MCF 10A (cell line): ENCODE measurements at regions of chr1 and their contacts with region 1.

Region 1: DNA sequence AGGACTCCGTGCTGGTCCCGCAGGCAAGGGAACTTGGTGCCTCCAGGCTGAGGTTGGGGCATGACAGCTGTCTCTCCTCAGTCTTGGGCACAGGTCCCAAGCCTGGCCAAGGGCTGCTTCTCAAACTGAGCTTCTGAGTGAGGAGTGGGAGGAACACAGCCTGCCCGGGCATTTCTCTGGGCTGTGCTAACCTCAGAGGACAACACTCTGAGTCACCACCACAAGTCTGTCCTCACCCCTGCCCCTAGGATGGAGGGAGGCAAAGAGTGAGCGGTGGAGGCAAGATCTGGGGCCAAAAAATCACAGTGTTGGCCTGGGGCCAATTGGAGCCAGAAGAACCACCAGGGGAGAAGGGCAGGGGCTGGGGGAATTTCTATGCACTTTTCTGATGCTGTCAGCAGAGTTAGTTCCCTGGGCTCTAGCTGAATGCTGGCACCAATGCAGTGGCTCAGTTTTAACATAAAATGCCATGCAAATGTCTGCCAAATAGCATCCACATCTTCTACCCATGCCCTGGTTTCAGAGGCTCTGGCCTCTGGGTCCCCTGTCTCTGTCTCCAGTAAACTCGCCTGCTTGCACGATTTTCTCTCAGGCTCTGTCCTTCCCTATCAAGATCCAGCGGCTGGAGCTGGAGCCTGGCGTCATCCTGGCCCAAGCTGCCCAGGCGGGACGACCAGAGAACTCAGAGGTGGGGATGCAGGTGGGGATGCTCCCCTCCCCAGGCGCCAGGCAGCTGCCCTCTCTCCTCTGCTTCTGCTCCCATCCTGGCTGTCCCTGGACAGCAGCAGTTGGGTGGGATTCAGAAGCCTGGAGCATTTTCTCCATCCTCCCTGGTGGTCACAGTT is 11.0 kb upstream of the CDK18 start:
- DNase-seq: peak; percentile 99
- H3K4me3 Mint-ChIP-seq: peak overlapping the region; percentile 53
- H3K27ac Mint-ChIP-seq: peak overlapping the region; percentile 86
- H3K4me1 Mint-ChIP-seq: peaks cover 38% of the 10 kb centered on the region
- H3K27me3 Mint-ChIP-seq: no peaks in the 10 kb centered on the region
- CTCF ChIP-seq: no peak

Region 2: GRCh38 chr1:205247130-205247921 is 246.1 kb before region 1 on chr1:
- CTCF ChIA-PET with region 1: no interaction called
- POLR2A ChIA-PET with region 1: no interaction called
- intact Hi-C with region 1: no loop called
- DNase-seq: no peak
- H3K4me3 Mint-ChIP-seq: no peak overlapping the region
- H3K27ac Mint-ChIP-seq: no peak overlapping the region
- H3K4me1 Mint-ChIP-seq: peaks cover 11% of the 10 kb centered on the region
- H3K27me3 Mint-ChIP-seq: no peaks in the 10 kb centered on the region
- CTCF ChIP-seq: no peak

Region 3: GRCh38 chr1:205284343-205285144 is 208.9 kb before region 1 on chr1:
- CTCF ChIA-PET with region 1: interaction called, 8 read pairs
- POLR2A ChIA-PET with region 1: interaction called, 13 read pairs
- intact Hi-C with region 1: no loop called
- DNase-seq: peak; percentile 100
- H3K4me3 Mint-ChIP-seq: peak overlapping the region; percentile 24
- H3K27ac Mint-ChIP-seq: peak overlapping the region; percentile 96
- H3K4me1 Mint-ChIP-seq: peaks cover 75% of the 10 kb centered on the region
- H3K27me3 Mint-ChIP-seq: no peaks in the 10 kb centered on the region
- CTCF ChIP-seq: no peak

Region 4: GRCh38 chr1:205422993-205423625 is 70.4 kb before region 1 on chr1:
- CTCF ChIA-PET with region 1: interaction called, 296 read pairs
- POLR2A ChIA-PET with region 1: no interaction called
- intact Hi-C with region 1: no loop called
- DNase-seq: no peak
- H3K4me3 Mint-ChIP-seq: no peak overlapping the region
- H3K27ac Mint-ChIP-seq: no peak overlapping the region
- H3K4me1 Mint-ChIP-seq: no peaks in the 10 kb centered on the region
- H3K27me3 Mint-ChIP-seq: peaks cover 67% of the 10 kb centered on the region
- CTCF ChIP-seq: peak; percentile 49

Region 5: GRCh38 chr1:205440476-205441317 is 52.8 kb before region 1 on chr1:
- CTCF ChIA-PET with region 1: interaction called, 110 read pairs
- POLR2A ChIA-PET with region 1: interaction called, 11 read pairs
- intact Hi-C with region 1: no loop called
- DNase-seq: peak; percentile 93
- H3K4me3 Mint-ChIP-seq: peak overlapping the region; percentile 1
- H3K27ac Mint-ChIP-seq: peak overlapping the region; percentile 77
- H3K4me1 Mint-ChIP-seq: peaks cover 25% of the 10 kb centered on the region
- H3K27me3 Mint-ChIP-seq: no peaks in the 10 kb centered on the region
- CTCF ChIP-seq: no peak

Region 6: DNA sequence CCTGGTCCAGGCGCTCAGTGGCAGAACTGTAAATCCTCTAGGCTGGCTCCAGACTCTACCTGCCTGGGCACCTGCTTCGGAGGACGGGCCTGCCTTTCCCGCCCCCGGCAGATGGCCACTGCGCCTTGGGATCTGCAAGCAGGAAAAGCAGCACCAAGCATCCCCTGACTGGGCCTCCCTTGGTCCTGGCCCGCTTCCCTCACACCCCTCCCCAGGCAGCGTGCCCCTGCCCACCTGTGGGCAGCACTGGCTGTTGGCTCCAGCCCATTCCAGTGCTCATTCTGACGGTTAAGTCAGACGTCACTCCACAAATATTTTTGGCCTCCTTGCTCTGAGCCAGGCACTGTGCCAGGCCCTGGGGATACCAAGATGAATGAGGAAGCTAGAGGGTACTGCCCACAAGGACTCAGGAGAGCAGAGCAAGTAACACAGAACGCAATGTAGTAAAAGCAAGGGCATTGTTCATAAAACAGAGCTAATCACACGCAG is 15.7 kb before region 1 on chr1:
- CTCF ChIA-PET with region 1: interaction called, 189 read pairs
- POLR2A ChIA-PET with region 1: interaction called, 19 read pairs
- intact Hi-C with region 1: no loop called
- DNase-seq: peak; percentile 100
- H3K4me3 Mint-ChIP-seq: no peak overlapping the region
- H3K27ac Mint-ChIP-seq: peak overlapping the region; percentile 33
- H3K4me1 Mint-ChIP-seq: peaks cover 15% of the 10 kb centered on the region
- H3K27me3 Mint-ChIP-seq: peaks cover 40% of the 10 kb centered on the region
- CTCF ChIP-seq: no peak

Region 7: GRCh38 chr1:205504311-205504984 is 11.0 kb after region 1 on chr1 and contains the start of gene CDK18:
- CTCF ChIA-PET with region 1: interaction called, 189 read pairs
- POLR2A ChIA-PET with region 1: interaction called, 73 read pairs
- intact Hi-C with region 1: no loop called
- DNase-seq: peak; percentile 95
- H3K4me3 Mint-ChIP-seq: peak within 1 kb of the TSS; percentile 89
- H3K27ac Mint-ChIP-seq: peak within 1 kb of the TSS; percentile 87
- H3K4me1 Mint-ChIP-seq: peaks cover 32% of the 10 kb centered on the region
- H3K27me3 Mint-ChIP-seq: no peaks in the 10 kb centered on the region
- CTCF ChIP-seq: no peak
- total RNA-seq, gene CDK18: 4.9 and 6.8 TPM in 2 replicates

Region 8: DNA sequence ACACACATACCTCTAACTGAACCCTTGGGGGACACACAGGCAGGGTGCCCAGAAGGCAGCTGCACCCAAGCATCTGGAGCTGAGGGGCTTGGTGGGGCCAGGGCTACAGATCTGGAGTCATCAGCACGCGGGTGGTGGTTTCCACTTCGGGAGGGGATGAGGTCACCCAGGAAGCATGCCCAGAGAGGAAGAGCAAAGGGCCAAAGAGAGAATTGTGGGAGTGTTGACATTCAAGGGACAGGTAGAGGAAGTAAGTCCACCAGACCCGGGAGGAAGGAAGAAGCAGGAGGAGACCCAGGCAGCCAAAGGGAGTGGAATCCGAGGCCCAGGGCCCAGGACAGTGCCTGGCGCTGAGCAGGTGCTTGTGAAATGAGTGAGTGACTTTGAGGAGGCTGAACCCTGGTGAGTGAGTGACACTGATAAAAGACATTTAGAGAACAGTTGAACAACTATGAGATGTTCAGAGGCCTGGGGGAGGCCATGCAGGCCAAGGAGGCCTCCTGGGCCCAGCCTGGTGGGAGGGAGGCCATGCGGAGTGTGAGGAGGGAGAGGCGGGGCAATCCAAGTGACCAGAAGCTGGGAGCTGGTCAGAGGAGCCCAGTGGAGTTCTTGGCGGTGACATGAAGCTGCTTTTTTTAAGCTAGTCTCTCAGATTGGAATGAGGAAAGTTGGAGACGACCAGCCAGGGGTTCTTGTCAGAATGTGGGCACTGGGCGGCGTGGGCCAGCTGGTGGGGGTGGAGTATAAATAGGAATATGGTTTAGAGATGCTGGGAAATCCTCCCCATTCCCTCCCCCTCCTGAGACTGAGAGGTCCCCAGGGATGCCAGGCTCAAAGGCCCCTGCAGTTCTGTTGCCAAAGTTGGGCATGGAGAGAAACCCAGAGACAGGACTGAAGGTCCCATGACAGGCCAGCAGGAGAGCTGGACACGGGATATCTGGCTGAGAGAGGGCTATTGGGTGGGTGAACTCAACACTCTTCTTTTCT is 18.9 kb after region 1 on chr1:
- CTCF ChIA-PET with region 1: interaction called, 1,608 read pairs
- POLR2A ChIA-PET with region 1: interaction called, 73 read pairs
- intact Hi-C with region 1: no loop called
- DNase-seq: no peak
- H3K4me3 Mint-ChIP-seq: no peak overlapping the region
- H3K27ac Mint-ChIP-seq: no peak overlapping the region
- H3K4me1 Mint-ChIP-seq: no peaks in the 10 kb centered on the region
- H3K27me3 Mint-ChIP-seq: no peaks in the 10 kb centered on the region
- CTCF ChIP-seq: no peak